ENCODE measurements at regions of chr5 and their contacts with region 1.

Region 1: DNA sequence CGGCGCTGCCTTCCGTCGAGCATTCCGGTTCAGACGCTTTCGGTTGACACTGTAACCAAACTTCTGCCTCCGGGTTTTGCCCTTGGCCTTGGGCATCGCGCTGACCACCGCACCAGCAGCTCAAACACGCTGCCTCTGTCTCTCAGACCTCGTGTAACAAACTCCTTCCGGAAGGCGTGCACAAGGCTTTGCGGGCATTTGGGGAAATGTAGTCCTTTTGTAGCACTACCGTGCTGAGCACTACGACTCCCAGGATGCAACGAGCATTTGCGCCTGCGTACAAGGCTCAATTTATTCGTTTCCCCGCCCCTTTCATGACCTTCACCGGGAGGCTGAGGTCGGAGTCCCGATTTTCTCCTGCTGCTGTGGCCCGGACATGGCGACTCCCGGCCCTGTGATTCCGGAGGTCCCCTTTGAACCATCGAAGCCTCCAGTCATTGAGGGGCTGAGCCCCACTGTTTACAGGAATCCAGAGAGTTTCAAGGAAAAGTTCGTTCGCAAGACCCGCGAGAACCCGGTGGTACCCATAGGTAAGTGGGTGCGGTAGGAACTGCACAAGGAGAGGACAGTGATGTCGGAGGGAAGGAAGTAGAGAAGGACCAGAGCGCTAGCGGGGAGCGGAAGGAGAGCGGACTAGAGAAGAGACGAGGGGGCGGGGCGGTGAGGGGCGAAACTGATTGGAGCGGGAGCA is at the starts of genes HIGD2A and NOP16:
- DNase-seq: peak; percentile 96
- H3K4me3 Mint-ChIP-seq: peak within 1 kb of the TSS; percentile 100
- H3K27ac Mint-ChIP-seq: peak within 1 kb of the TSS; percentile 98
- H3K4me1 Mint-ChIP-seq: peaks cover 44% of the 10 kb centered on the region
- H3K27me3 Mint-ChIP-seq: no peaks in the 10 kb centered on the region
- total RNA-seq, gene HIGD2A: 93.2 and 93.5 TPM in 2 replicates
- total RNA-seq, gene NOP16: 111 TPM in 2 replicates

Region 2: GRCh38 chr5:175517818-175518450 is 870.7 kb before region 1 on chr5:
- intact Hi-C with region 1: loop called (anchors 1 kb)
- DNase-seq: peak; percentile 73
- H3K4me3 Mint-ChIP-seq: peak overlapping the region; percentile 74
- H3K27ac Mint-ChIP-seq: peak overlapping the region; percentile 99
- H3K4me1 Mint-ChIP-seq: peaks cover 86% of the 10 kb centered on the region
- H3K27me3 Mint-ChIP-seq: no peaks in the 10 kb centered on the region

Region 3: GRCh38 chr5:176415952-176416924 is 27.6 kb after region 1 on chr5 and contains the start of gene CLTB:
- intact Hi-C with region 1: loop called (anchors 1 kb)
- DNase-seq: peak; percentile 76
- H3K4me3 Mint-ChIP-seq: peak within 1 kb of the TSS; percentile 84
- H3K27ac Mint-ChIP-seq: peak within 1 kb of the TSS; percentile 44
- H3K4me1 Mint-ChIP-seq: peaks cover 38% of the 10 kb centered on the region
- H3K27me3 Mint-ChIP-seq: peaks cover 14% of the 10 kb centered on the region
- total RNA-seq, gene CLTB: 71.6 and 84.0 TPM in 2 replicates

Region 4: GRCh38 chr5:177006265-177006972 is 617.8 kb after region 1 on chr5 and contains the start of gene UIMC1:
- intact Hi-C with region 1: loop called (anchors 1 kb)
- DNase-seq: peak; percentile 91
- H3K4me3 Mint-ChIP-seq: peak within 1 kb of the TSS; percentile 96
- H3K27ac Mint-ChIP-seq: peak within 1 kb of the TSS; percentile 95
- H3K4me1 Mint-ChIP-seq: peaks cover 22% of the 10 kb centered on the region
- H3K27me3 Mint-ChIP-seq: no peaks in the 10 kb centered on the region
- total RNA-seq, gene UIMC1: 57.0 and 70.6 TPM in 2 replicates

Region 5: GRCh38 chr5:177351385-177352329 is 963.1 kb after region 1 on chr5 and contains the start of gene LMAN2:
- intact Hi-C with region 1: loop called (anchors 1 kb)
- DNase-seq: peak; percentile 90
- H3K4me3 Mint-ChIP-seq: peak within 1 kb of the TSS; percentile 98
- H3K27ac Mint-ChIP-seq: peak within 1 kb of the TSS; percentile 100
- H3K4me1 Mint-ChIP-seq: peaks cover 47% of the 10 kb centered on the region
- H3K27me3 Mint-ChIP-seq: no peaks in the 10 kb centered on the region
- total RNA-seq, gene LMAN2: 108 and 118 TPM in 2 replicates

Measured in activated T-helper 1 cell treated with anti-CD3 and anti-CD28 coated beads, Interleukin-12 subunit alpha, Interleukin-12 subunit beta, Interleukin-2, Interleukin-4 antibody, amounts not matched to agents 30 ng/mL and 10 ng/mL and 1 ng/mL, durations not matched to agents 14 hours and 24 hours and 36 hours (primary cell).